ENCODE measurements at regions of chr15 and their contacts with region 1.

Region 1: GRCh38 chr15:26864664-26865191 is 2.1 kb upstream of the GABRA5 start:
- ATAC-seq: peak; percentile 39 to 87 (median 48)
- H3K4me3 ChIP-seq: no peak overlapping the region
- H3K27ac ChIP-seq: no peak overlapping the region
- H3K4me1 ChIP-seq: peaks cover 7 to 8% of the 10 kb centered on the region in 2 donors

Region 2: DNA sequence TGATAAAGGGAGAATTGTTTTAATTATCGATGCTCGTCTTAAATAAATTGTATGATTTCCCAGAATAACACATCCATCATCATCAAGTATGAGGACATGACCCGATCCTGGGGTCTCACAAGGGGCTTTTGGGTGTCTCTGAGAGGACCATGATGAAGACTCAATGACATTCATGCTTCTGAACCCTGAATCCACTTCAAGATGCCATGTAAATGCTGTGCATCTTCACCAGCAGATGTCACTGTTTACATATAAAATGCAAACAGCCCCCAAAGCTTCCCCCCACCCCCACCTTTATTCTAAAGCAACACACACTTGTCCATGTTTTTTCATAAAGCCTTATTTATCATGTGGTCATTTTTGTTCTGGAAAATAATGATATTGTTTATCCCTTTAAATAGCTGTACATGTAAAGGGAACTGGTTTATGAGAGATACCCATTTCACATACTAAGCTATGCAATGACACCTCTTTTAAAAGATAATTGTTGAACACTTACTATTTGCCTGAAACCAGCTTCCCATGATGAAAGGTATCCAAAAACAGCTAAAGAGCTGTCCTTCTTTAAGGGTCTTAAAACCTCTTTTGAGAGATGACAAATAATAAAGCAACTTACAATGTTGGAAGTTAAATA is 1356.2 kb before region 1 on chr15:
- in situ Hi-C with region 1: loop called in 5 of 9 experiments (anchors 10 to 25 kb)
- ATAC-seq: peak in 5 of 8 experiments; percentile 22 to 51 (median 45)
- H3K4me3 ChIP-seq: no peak overlapping the region
- H3K27ac ChIP-seq: no peak overlapping the region
- H3K4me1 ChIP-seq: peaks cover 12 to 17% of the 10 kb centered on the region in 2 donors

Region 3: DNA sequence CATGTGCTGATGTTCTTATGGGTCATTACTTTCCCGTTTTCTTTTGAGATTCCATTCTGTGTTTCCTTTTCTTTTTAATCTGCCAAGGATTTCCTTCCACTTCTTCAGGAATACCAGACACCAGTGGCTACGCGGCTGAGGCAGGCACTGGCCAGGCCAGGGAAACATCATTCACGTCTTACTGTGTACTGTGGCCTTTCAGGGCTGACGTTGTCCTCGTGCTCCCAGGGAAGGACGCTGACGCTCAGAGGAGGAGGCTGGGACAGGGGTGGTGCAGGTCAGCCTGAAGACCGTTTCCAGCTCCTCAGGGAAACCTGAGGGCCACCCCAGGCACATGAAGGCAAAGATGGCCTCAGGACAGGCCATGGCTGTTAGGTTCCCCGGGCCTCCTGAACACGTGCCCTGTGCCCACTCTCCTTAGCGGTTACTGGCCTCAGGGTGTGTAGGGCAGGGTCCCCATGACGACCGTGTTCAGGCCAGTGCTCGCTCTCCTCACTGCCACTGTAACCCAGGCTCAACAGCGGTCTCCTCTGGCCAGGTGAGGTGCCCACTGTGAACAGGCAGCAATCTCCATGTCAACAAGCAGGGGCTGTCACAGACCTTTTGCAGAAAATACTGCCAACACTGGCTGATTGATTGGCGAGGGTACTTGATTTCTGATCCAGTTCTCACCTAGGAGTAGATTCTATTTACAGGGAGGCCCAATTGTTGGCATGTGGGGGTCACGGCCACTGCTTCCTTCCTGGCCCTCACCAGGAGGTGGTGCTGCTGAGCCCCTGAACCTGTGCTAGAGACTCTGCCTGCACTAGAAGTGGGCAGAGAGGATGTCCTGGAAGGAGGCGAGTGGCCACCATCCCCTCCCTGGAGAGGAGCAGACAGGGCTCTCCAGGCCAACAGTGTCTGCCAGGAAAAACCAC is 1171.1 kb before region 1 on chr15:
- in situ Hi-C with region 1: loop called in 1 of 9 experiments (anchors 25 kb)
- ATAC-seq: peak in 6 of 8 experiments; percentile 24 to 82 (median 58)
- H3K4me3 ChIP-seq: no peak overlapping the region
- H3K27ac ChIP-seq: no peak overlapping the region
- H3K4me1 ChIP-seq: peaks cover 0 to 6% of the 10 kb centered on the region in 2 donors

Region 4: GRCh38 chr15:26179906-26180305 is 684.8 kb before region 1 on chr15:
- in situ Hi-C with region 1: loop called in 1 of 9 experiments (anchors 25 kb)
- ATAC-seq: peak in 7 of 8 experiments; percentile 55 to 85 (median 80)
- H3K4me3 ChIP-seq: no peak overlapping the region
- H3K27ac ChIP-seq: no peak overlapping the region
- H3K4me1 ChIP-seq: peaks cover 24 to 26% of the 10 kb centered on the region in 2 donors

Measured in motor neuron (in vitro differentiated cells).